ENCODE measurements at regions of chr1 and their contacts with region 1.

Region 1: GRCh38 chr1:172532700-172533509 is at the start of gene SUCO:
- DNase-seq: peak; percentile 98 to 100
- H3K4me3 ChIP-seq: peak within 1 kb of the TSS; percentile 82
- H3K27ac ChIP-seq: peak within 1 kb of the TSS; percentile 74
- H3K4me1 ChIP-seq: peaks cover 43% of the 10 kb centered on the region
- H3K27me3 ChIP-seq: no peaks in the 10 kb centered on the region
- CTCF ChIP-seq: no peak
- total RNA-seq, gene SUCO: 31.2 and 34.0 TPM in 2 replicates

Region 2: DNA sequence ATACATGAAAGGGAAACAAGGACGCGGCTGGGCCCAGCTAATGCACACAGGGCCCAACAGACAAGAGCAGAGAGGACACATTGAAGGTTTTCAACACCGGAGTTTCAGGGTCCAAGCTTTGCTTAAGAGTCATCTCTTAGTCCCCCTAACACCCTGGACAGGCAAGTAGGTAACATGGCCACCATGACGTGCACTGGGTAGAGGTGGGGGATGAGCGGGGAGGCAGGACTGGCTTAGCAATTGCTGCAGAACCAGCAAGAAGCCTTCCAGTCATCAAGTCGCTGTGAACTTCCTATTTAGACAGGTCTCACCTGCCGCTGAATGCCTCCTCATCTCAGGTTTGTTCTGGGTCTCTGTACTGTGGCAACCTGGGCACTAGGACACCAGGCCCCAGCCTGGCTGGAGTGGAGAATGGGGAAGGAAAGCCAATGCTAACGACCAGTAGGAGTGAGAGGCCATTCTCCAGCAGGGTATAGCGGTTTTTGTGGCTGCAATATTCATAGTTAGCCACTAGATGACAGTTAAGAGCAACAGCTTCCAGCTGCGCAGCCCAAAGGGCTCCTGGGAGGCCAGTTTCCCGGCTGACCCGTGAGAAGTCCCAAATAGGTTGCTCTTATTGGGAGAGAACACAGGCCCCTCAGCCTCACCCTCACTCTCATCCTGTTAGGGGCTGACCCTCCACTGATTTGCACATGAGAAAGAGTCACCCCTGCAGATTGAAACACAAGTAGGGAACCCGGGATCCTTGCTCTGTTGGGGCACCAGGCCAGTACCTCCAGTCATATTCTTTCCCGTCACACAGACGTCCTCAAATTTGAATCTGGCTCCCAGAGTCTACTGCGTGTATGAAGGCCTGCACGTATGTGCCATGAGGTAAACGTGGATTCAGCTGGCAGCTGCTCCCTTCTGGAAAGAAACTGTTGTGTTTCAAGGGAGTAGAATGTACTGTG is 83.0 kb before region 1 on chr1:
- CTCF ChIA-PET with region 1: interaction called, 4 read pairs
- POLR2A ChIA-PET with region 1: interaction called, 10 read pairs
- intact Hi-C with region 1: loop called (anchors 1 kb)
- DNase-seq: peak; percentile 42 to 52
- H3K4me3 ChIP-seq: peak overlapping the region; percentile 38; the same call in 1 of the 2 replicates
- H3K27ac ChIP-seq: peak overlapping the region; percentile 91
- H3K4me1 ChIP-seq: peaks cover 67% of the 10 kb centered on the region
- H3K27me3 ChIP-seq: no peaks in the 10 kb centered on the region
- CTCF ChIP-seq: peak; percentile 76

Region 3: DNA sequence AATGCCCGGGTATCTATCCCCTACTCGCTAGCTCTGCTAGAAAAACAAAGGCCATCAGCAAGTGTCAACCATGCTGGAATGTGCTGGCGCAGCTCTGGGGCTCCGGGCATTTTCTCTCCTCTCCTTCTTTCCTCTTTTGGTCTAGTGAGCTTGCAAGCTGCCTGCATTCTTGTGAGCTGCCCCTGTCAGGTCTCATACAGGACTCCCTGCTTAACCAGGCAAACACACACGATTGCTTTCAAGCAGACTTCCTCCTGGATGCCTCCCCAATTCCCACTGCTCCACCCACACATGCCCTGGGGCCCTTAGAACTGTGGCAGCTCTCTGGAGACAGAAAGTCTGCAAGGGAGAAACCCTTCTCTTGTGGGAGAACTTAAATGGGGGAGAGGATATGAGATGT is 35.7 kb before region 1 on chr1:
- CTCF ChIA-PET with region 1: no interaction called
- POLR2A ChIA-PET with region 1: interaction called, 9 read pairs
- intact Hi-C with region 1: loop called (anchors 1 kb)
- DNase-seq: peak; percentile 63 to 83
- H3K4me3 ChIP-seq: no peak overlapping the region
- H3K27ac ChIP-seq: no peak overlapping the region
- H3K4me1 ChIP-seq: peaks cover 35% of the 10 kb centered on the region
- H3K27me3 ChIP-seq: no peaks in the 10 kb centered on the region
- CTCF ChIP-seq: no peak

Region 4: GRCh38 chr1:172588296-172589291 is 55.7 kb after region 1 on chr1:
- CTCF ChIA-PET with region 1: no interaction called
- POLR2A ChIA-PET with region 1: interaction called, 10 read pairs
- intact Hi-C with region 1: loop called (anchors 1 kb)
- DNase-seq: peak; percentile 58 to 90
- H3K4me3 ChIP-seq: peak overlapping the region; percentile 35
- H3K27ac ChIP-seq: peak overlapping the region; percentile 78
- H3K4me1 ChIP-seq: peaks cover 44% of the 10 kb centered on the region
- H3K27me3 ChIP-seq: no peaks in the 10 kb centered on the region
- CTCF ChIP-seq: no peak

Region 5: GRCh38 chr1:172699111-172699510 is 166.2 kb after region 1 on chr1:
- CTCF ChIA-PET with region 1: no interaction called
- POLR2A ChIA-PET with region 1: no interaction called
- intact Hi-C with region 1: loop called (anchors 5 kb)
- DNase-seq: peak in 1 of 2 experiments; percentile 13
- H3K4me3 ChIP-seq: no peak overlapping the region
- H3K27ac ChIP-seq: no peak overlapping the region
- H3K4me1 ChIP-seq: no peaks in the 10 kb centered on the region
- H3K27me3 ChIP-seq: no peaks in the 10 kb centered on the region
- CTCF ChIP-seq: no peak

Region 6: DNA sequence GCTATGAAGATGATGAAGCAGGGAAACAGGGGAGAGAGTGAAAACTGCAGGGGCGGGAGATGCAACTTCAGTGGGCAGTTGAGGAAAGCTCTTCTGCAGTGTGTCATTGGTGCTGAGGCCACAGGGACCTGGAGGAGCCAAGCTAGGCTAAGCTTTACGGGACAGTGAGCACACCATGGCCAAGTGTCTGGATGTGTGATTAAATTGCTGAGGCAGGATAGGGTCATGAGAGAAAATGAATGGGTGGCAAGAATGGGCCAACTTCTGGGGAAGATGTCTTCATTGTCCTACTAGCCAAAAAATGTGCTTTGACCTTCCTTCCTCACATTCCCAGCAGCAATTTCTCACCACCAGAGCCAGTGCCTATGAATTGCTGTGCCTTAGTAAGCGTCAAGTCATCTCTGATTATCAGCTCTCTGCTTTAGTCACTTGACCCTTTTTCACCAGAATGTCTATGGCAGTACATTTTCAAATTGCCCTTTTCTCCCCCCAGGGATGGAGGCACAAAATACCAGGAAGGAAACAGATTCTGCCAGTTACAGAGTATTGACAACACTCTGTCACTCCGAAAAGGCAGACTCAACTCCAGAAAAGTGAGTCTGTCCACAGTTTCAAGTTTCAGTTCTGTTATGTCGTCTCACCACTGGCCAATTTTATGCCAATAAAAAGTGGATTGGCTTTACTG is 350.3 kb after region 1 on chr1:
- CTCF ChIA-PET with region 1: no interaction called
- POLR2A ChIA-PET with region 1: no interaction called
- intact Hi-C with region 1: no loop called
- DNase-seq: no peak
- H3K4me3 ChIP-seq: no peak overlapping the region
- H3K27ac ChIP-seq: no peak overlapping the region
- H3K4me1 ChIP-seq: peaks cover 25% of the 10 kb centered on the region
- H3K27me3 ChIP-seq: no peaks in the 10 kb centered on the region
- CTCF ChIP-seq: no peak